WTC11 (cell line): ENCODE measurements at regions of chr14 and their contacts with region 1.

Region 1: GRCh38 chr14:103185051-103185992 is 62.1 kb downstream of the TNFAIP2 start:
- DNase-seq: no peak
- ATAC-seq: no peak
- H3K4me3 Mint-ChIP-seq: no peak overlapping the region
- H3K27ac Mint-ChIP-seq: peak overlapping the region; percentile 49; the same call in 1 of the 2 replicates
- H3K4me1 Mint-ChIP-seq: peaks cover 31% of the 10 kb centered on the region
- H3K27me3 Mint-ChIP-seq: peaks cover 27% of the 10 kb centered on the region
- CTCF ChIP-seq: peak; percentile 62

Region 2: DNA sequence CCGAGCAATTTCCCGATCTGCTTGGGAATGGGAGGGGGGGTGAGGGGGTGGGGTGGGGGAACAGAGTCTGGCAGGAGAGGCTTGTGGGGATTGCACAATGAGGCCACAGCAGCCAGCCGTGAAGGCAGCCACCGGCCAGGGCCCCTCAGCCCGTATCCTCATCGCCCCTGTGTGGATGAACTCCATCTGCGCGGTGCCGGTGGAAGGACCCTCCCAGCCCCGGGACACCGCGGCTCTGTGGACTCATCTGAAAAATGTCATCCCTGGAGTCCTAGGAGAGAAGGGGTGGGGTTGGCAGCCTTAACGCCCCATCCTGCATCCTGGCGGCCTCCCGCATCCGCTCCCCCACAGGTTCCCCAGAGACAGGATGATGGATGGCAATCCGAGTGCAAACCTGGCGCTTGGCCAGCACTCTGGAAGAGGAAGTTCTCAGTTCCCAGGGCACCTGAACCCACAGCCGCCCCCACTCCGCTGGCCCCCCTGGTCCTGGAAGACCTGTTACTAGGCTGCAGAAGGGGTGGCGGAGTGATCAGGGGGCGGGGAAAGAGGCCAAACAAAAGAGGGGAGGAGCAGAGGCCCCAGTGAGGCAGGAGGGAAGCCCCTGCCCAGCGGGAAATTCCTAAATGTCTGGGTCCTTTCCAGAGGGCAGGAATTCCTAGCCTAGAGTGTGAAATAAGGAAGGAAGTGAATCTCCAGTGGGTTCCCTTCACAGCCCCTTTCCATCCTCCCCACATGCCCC is 63.3 kb before region 1 on chr14:
- CTCF ChIA-PET with region 1: interaction called, 13 read pairs
- POLR2A ChIA-PET with region 1: no interaction called
- DNase-seq: no peak
- ATAC-seq: peak; percentile 17
- H3K4me3 Mint-ChIP-seq: peak overlapping the region; percentile 58
- H3K27ac Mint-ChIP-seq: no peak overlapping the region
- H3K4me1 Mint-ChIP-seq: peaks cover 16% of the 10 kb centered on the region
- H3K27me3 Mint-ChIP-seq: peaks cover 26% of the 10 kb centered on the region
- CTCF ChIP-seq: no peak